ENCODE measurements at regions of chr3 and their contacts with region 1.

Region 1: DNA sequence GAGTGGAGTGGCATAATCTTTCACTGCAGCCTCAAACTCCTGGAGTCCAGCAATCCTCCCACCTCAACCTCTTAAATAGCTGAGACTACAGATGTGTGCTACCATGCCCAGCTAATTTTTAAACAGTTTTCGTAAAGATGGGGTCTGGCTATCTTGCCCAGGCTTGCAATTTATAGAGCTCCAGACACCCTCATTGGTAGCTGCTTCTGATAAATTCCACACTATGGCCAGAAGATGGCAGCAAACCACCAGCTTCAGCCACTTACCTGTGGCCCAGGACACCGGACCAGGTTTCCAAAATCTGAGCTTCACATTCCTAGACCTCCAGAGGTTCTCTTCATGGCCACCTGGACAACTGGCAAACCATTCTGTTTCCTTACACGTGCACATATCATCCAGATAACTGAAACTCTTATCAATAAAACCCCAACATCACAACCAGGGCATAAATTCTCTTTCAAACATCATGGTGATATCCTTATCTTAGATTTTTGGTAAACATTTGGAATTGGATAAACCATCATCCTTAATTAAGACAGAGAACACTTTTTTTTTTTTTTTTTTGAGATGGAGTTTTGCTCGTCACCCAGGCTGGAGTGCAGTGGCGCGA is 28.9 kb downstream of the FBXW12 start:
- DNase-seq: peak; percentile 60 to 61
- H3K4me3 ChIP-seq: no peak overlapping the region
- H3K27ac ChIP-seq: no peak overlapping the region
- H3K4me1 ChIP-seq: peaks cover 7% of the 10 kb centered on the region; the same call in 1 of the 2 replicates
- H3K27me3 ChIP-seq: no peaks in the 10 kb centered on the region
- CTCF ChIP-seq: peak; percentile 82

Region 2: GRCh38 chr3:48188266-48189201 is 212.4 kb before region 1 on chr3 and contains the start of gene CDC25A:
- CTCF ChIA-PET with region 1: no interaction called
- POLR2A ChIA-PET with region 1: interaction called, 13 read pairs
- intact Hi-C with region 1: no loop called
- DNase-seq: peak; percentile 96
- H3K4me3 ChIP-seq: peak within 1 kb of the TSS; percentile 87
- H3K27ac ChIP-seq: no peak within 1 kb of the TSS
- H3K4me1 ChIP-seq: peaks cover 10% of the 10 kb centered on the region; the same call in 1 of the 2 replicates
- H3K27me3 ChIP-seq: no peaks in the 10 kb centered on the region
- CTCF ChIP-seq: no peak
- total RNA-seq, gene CDC25A: 9.7 and 10.5 TPM in 2 replicates

Region 3: GRCh38 chr3:48194446-48195071 is 206.4 kb before region 1 on chr3:
- CTCF ChIA-PET with region 1: interaction called, 5 read pairs
- POLR2A ChIA-PET with region 1: no interaction called
- intact Hi-C with region 1: loop called (anchors 1 kb)
- DNase-seq: peak; percentile 55 to 75
- H3K4me3 ChIP-seq: no peak overlapping the region
- H3K27ac ChIP-seq: no peak overlapping the region
- H3K4me1 ChIP-seq: no peaks in the 10 kb centered on the region
- H3K27me3 ChIP-seq: no peaks in the 10 kb centered on the region
- CTCF ChIP-seq: peak; percentile 84

Region 4: DNA sequence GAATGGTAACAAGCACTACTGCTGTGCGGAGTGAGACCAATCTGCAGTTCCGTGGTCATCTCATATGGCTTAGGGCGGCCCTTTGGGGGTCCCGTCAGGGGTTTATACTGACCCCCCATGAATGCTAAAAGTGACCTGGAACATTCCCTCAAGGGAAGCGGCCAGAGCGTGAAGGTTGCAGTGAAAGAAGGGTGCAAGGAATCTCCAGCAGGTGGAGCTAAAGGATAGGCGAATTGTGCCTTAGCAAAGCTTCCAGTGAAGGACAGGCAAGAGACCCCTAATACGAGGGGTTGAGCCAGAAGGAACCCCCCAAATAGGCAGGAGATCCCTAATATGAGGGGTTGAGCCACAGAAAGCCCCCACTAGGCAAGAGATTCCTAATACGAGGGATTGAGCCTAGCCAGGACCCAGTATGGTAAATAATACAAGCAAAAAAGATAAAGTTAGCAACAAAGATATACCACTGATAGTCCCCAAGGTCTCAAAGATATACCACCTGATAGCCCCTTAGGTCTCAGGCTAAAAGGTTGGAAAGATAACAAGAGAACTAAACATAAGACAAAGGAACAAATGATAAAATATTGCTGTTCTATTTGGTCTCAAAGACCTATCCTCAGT is 127.2 kb before region 1 on chr3:
- CTCF ChIA-PET with region 1: interaction called, 6 read pairs
- POLR2A ChIA-PET with region 1: interaction called, 6 read pairs
- intact Hi-C with region 1: loop called (anchors 1 kb)
- DNase-seq: peak; percentile 44 to 53
- H3K4me3 ChIP-seq: no peak overlapping the region
- H3K27ac ChIP-seq: no peak overlapping the region
- H3K4me1 ChIP-seq: peaks cover 19% of the 10 kb centered on the region
- H3K27me3 ChIP-seq: no peaks in the 10 kb centered on the region
- CTCF ChIP-seq: peak; percentile 81

Region 5: GRCh38 chr3:48429317-48429959 is 28.5 kb after region 1 on chr3:
- CTCF ChIA-PET with region 1: interaction called, 19 read pairs
- POLR2A ChIA-PET with region 1: interaction called, 5 read pairs
- intact Hi-C with region 1: no loop called
- DNase-seq: peak; percentile 42 to 92
- H3K4me3 ChIP-seq: peak overlapping the region; percentile 73
- H3K27ac ChIP-seq: peak overlapping the region; percentile 61
- H3K4me1 ChIP-seq: peaks cover 43% of the 10 kb centered on the region
- H3K27me3 ChIP-seq: no peaks in the 10 kb centered on the region
- CTCF ChIP-seq: no peak

Region 6: GRCh38 chr3:48685602-48686511 is 284.9 kb after region 1 on chr3 and contains the start of gene NCKIPSD:
- CTCF ChIA-PET with region 1: no interaction called
- POLR2A ChIA-PET with region 1: no interaction called
- intact Hi-C with region 1: loop called (anchors 2 kb)
- DNase-seq: peak; percentile 52 to 86
- H3K4me3 ChIP-seq: peak within 1 kb of the TSS; percentile 72
- H3K27ac ChIP-seq: peak within 1 kb of the TSS; percentile 46; the same call in 1 of the 2 replicates
- H3K4me1 ChIP-seq: peaks cover 9% of the 10 kb centered on the region
- H3K27me3 ChIP-seq: no peaks in the 10 kb centered on the region
- CTCF ChIP-seq: peak; percentile 72
- total RNA-seq, gene NCKIPSD: 40.0 and 53.3 TPM in 2 replicates

Measured in PC-9 (cell line).